Naive thymus-derived CD4-positive, alpha-beta T cell (primary cell): ENCODE measurements at regions of chr16 and their contacts with region 1.

Region 1: GRCh38 chr16:18932243-18932981 is 6.2 kb upstream of the SMG1 start:
- DNase-seq: no peak
- ATAC-seq: no peak
- H3K4me3 ChIP-seq: no peak overlapping the region
- H3K4me3 Mint-ChIP-seq: no peak overlapping the region
- H3K27ac ChIP-seq: no peak overlapping the region
- H3K27ac Mint-ChIP-seq: peak overlapping the region in 1 of 9 donors; percentile 43
- H3K4me1 ChIP-seq: no peaks in the 10 kb centered on the region
- H3K4me1 Mint-ChIP-seq: peaks cover 0 to 20% (median 6%) of the 10 kb centered on the region in 7 donors
- H3K27me3 ChIP-seq: no peaks in the 10 kb centered on the region
- H3K27me3 Mint-ChIP-seq: peaks cover 0 to 2% (median 0%) of the 10 kb centered on the region in 5 donors

Region 2: GRCh38 chr16:18959031-18959505 is 26.7 kb after region 1 on chr16:
- CTCF ChIA-PET with region 1: no interaction called
- POLR2A ChIA-PET with region 1: no interaction called
- intact Hi-C with region 1: no loop called
- DNase-seq: no peak
- ATAC-seq: no peak
- H3K4me3 ChIP-seq: no peak overlapping the region
- H3K4me3 Mint-ChIP-seq: no peak overlapping the region
- H3K27ac ChIP-seq: no peak overlapping the region
- H3K27ac Mint-ChIP-seq: peak overlapping the region in 1 of 9 donors; percentile 4
- H3K4me1 ChIP-seq: no peaks in the 10 kb centered on the region
- H3K4me1 Mint-ChIP-seq: peaks cover 0 to 15% (median 5%) of the 10 kb centered on the region in 7 donors
- H3K27me3 ChIP-seq: no peaks in the 10 kb centered on the region
- H3K27me3 Mint-ChIP-seq: peaks cover 0 to 12% (median 0%) of the 10 kb centered on the region in 5 donors

Region 3: GRCh38 chr16:18969050-18969854 is 36.8 kb after region 1 on chr16:
- CTCF ChIA-PET with region 1: no interaction called
- POLR2A ChIA-PET with region 1: no interaction called
- intact Hi-C with region 1: loop called in 1 of 2 experiments (anchors 2 kb)
- DNase-seq: peak; percentile 42 to 82 (median 62)
- ATAC-seq: peak; percentile 93
- H3K4me3 ChIP-seq: peak overlapping the region; percentile 8
- H3K4me3 Mint-ChIP-seq: peak overlapping the region in 8 of 10 donors; percentile 17 to 58 (median 46)
- H3K27ac ChIP-seq: no peak overlapping the region
- H3K27ac Mint-ChIP-seq: no peak overlapping the region
- H3K4me1 ChIP-seq: no peaks in the 10 kb centered on the region
- H3K4me1 Mint-ChIP-seq: peaks cover 4 to 9% (median 7%) of the 10 kb centered on the region in 7 donors
- H3K27me3 ChIP-seq: no peaks in the 10 kb centered on the region
- H3K27me3 Mint-ChIP-seq: peaks cover 0 to 2% (median 0%) of the 10 kb centered on the region in 5 donors